Ovary (tissue), 10 donors: ENCODE measurements at regions of chr11 and their contacts with region 1.

Region 1: DNA sequence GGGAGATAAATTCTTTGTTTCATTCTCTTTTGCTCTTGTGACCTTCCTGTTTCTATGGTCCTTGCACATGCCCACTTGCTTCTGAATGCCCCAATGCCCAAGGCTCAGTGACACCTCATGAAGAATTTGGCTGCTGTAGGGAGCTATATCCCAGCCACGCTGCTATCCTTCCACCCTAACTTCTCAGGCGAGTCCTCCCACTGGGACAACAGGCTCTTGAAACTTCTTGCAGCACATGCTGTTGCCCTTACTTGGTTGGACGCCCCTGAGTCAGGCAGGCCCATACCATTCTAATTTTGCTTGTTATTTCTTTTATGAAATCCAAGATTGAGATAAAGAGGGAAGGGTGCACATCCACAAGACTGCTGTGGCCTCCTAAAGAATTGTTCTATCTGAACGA is 57.6 kb upstream of the BLID start:
- DNase-seq: no peak
- H3K4me3 ChIP-seq: no peak overlapping the region
- H3K27ac ChIP-seq: no peak overlapping the region
- H3K4me1 ChIP-seq: peaks cover 2% of the 10 kb centered on the region
- H3K27me3 ChIP-seq: no peaks in the 10 kb centered on the region
- CTCF ChIP-seq: no peak
- EP300 ChIP-seq: no peak
- POLR2A ChIP-seq: no peak

Region 2: DNA sequence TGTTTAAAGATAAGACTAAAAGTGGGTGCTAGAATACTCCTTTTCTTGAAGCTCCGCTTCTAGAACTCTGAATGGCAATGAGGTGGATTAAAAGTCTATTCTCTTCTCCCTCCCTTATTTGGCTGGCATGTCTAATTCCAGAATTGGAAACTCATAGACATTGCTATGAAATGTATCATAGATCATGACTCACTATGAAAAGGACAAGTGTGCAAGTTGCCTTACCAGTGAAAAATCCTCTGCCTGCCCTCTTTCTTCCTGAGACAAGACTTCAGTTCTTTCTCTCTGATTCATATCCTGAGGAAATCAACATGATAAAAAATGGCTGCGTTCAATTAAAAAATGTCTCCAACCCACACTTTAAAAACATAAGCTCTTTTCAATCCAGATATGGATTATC is 15.6 kb after region 1 on chr11:
- intact Hi-C with region 1: loop called in 1 of 4 experiments (anchors 1 kb)
- DNase-seq: no peak
- H3K4me3 ChIP-seq: no peak overlapping the region
- H3K27ac ChIP-seq: no peak overlapping the region
- H3K4me1 ChIP-seq: peaks cover 7% of the 10 kb centered on the region
- H3K27me3 ChIP-seq: no peaks in the 10 kb centered on the region
- CTCF ChIP-seq: no peak
- EP300 ChIP-seq: no peak
- POLR2A ChIP-seq: no peak

Region 3: DNA sequence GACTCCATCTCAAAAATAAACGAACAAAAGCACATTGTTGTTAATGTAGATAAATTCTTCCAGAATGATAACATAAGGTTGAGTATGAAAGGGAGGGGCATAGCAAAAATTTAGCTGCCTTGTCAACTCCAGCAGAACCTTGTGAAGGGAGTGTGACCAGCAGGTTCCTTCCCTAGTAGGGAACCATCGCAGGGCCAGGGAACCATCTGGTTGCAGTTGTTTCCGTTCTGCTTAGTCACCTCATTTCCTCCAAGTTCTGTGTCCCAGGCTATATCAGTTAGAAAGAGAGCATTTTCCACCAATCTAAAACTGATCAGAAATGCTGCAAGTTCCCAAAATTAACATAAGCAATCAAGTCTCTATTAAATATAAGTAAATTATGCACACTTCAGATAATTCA is 69.1 kb after region 1 on chr11:
- intact Hi-C with region 1: no loop called
- DNase-seq: no peak
- H3K4me3 ChIP-seq: no peak overlapping the region
- H3K27ac ChIP-seq: no peak overlapping the region
- H3K4me1 ChIP-seq: no peaks in the 10 kb centered on the region
- H3K27me3 ChIP-seq: no peaks in the 10 kb centered on the region
- CTCF ChIP-seq: no peak
- EP300 ChIP-seq: no peak
- POLR2A ChIP-seq: no peak

Region 4: DNA sequence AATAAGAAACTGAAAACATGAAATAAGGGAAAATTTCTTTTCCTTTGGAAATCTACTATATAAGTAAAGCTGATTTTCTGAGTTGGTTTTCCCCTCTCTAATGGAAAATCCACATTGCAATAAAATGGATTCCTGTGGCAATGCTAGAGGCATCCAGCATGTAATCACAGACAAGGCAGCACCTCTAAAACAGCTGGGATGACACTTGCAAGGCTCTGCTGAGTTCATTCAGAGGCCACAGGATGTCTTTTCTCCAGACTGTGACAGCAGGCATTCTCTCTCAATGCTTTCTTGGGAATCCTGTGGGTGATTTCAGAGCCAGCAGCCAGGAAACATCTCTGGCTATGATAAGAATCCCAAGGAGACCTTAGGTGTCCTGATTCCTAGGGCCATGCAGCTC is 143.7 kb after region 1 on chr11:
- intact Hi-C with region 1: no loop called
- DNase-seq: no peak
- H3K4me3 ChIP-seq: no peak overlapping the region
- H3K27ac ChIP-seq: no peak overlapping the region
- H3K4me1 ChIP-seq: no peaks in the 10 kb centered on the region
- H3K27me3 ChIP-seq: no peaks in the 10 kb centered on the region
- CTCF ChIP-seq: no peak
- EP300 ChIP-seq: no peak
- POLR2A ChIP-seq: no peak